ENCODE measurements at regions of chr11 and their contacts with region 1.

Region 1: DNA sequence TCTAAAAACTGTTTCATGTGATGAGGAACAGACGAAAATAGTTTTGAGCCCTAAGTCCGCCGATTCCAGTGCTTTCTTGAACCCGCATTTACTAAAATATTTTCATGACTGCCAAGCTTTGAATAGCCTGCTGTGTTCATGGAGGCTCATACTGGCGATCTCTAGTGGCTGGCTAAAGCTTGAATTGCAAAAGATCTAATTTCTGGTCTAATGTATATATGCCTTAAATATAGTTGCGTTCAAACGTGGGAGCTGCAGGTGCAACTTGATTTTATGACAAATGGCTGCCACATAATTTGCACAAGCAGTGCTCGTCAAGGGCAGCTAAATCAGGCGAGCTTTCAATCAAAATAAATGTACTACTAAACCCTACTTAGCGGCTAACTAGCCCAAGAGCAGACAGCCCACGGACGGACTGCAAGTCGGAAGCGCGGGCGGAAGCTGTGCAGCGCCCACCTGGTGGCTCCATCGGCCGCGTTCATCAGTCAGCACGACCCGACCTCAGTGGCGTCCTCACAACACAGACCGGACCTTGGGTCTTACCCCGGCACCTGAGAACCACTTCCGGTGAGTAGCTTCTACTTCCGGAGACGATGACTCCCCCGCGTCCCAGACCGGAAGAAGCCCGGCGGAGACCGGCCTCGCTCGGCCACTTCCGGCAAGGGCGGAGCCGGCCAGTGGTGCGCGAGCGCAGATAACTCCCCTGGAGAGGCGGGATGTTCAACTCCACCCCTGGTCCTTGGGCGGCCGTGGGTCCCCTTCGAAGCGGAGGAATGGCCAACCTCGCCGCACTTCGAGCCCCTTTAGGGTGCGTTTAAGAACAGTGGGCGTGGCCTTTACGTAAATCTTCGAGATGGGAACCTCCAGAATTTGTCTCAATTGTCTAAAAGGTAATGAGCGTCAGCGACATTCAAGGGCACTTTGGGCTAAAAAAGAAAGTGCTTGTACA is 6.1 kb downstream of the RPL27A start:
- DNase-seq: peak; percentile 92
- ATAC-seq: peak; percentile 90
- H3K4me3 Mint-ChIP-seq: peak overlapping the region; percentile 94
- H3K27ac Mint-ChIP-seq: peak overlapping the region; percentile 98
- H3K4me1 Mint-ChIP-seq: peaks cover 56% of the 10 kb centered on the region
- H3K27me3 Mint-ChIP-seq: no peaks in the 10 kb centered on the region

Region 2: GRCh38 chr11:8545698-8546366 is 142.9 kb before region 1 on chr11:
- CTCF ChIA-PET with region 1: no interaction called
- POLR2A ChIA-PET with region 1: no interaction called
- intact Hi-C with region 1: no loop called
- DNase-seq: no peak
- ATAC-seq: no peak
- H3K4me3 Mint-ChIP-seq: no peak overlapping the region
- H3K27ac Mint-ChIP-seq: no peak overlapping the region
- H3K4me1 Mint-ChIP-seq: no peaks in the 10 kb centered on the region
- H3K27me3 Mint-ChIP-seq: peaks cover 7% of the 10 kb centered on the region

Region 3: DNA sequence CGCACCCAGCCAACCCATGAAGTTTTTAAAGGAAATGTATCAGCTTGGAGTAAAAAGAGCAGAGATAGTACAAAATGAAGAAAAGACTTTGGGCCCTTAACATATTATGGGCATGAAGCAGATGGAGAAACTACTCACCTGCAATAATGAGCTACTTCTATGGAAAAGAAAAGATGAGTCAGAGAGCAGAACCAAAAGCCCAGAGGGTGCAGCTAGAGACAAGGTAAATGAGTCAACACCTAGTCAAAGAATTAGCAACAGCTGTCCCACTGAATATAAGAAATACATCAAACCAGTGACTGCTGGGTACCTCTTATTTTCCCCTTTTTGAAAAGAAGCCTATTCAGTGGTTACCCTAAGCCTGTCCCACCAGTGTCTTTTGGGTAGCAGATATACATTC is 55.7 kb after region 1 on chr11:
- CTCF ChIA-PET with region 1: no interaction called
- POLR2A ChIA-PET with region 1: no interaction called
- intact Hi-C with region 1: loop called in 1 of 2 experiments (anchors 2 kb)
- DNase-seq: peak; percentile 20
- ATAC-seq: peak; percentile 98
- H3K4me3 Mint-ChIP-seq: no peak overlapping the region
- H3K27ac Mint-ChIP-seq: no peak overlapping the region
- H3K4me1 Mint-ChIP-seq: peaks cover 9% of the 10 kb centered on the region
- H3K27me3 Mint-ChIP-seq: peaks cover 15% of the 10 kb centered on the region

Region 4: GRCh38 chr11:8911029-8911826 is 222.5 kb after region 1 on chr11 and contains the start of gene AKIP1:
- CTCF ChIA-PET with region 1: no interaction called
- POLR2A ChIA-PET with region 1: interaction called, 3 read pairs
- intact Hi-C with region 1: loop called in 1 of 2 experiments (anchors 5 kb)
- DNase-seq: peak; percentile 94
- ATAC-seq: peak; percentile 76
- H3K4me3 Mint-ChIP-seq: peak within 1 kb of the TSS; percentile 86
- H3K27ac Mint-ChIP-seq: peak within 1 kb of the TSS; percentile 89
- H3K4me1 Mint-ChIP-seq: peaks cover 45% of the 10 kb centered on the region
- H3K27me3 Mint-ChIP-seq: peaks cover 6% of the 10 kb centered on the region
- total RNA-seq, gene AKIP1: 29.8 to 32.2 TPM

Region 5: GRCh38 chr11:9060700-9061111 is 372.0 kb after region 1 on chr11:
- CTCF ChIA-PET with region 1: no interaction called
- POLR2A ChIA-PET with region 1: no interaction called
- intact Hi-C with region 1: loop called in 1 of 2 experiments (anchors 5 kb)
- DNase-seq: peak; percentile 88
- ATAC-seq: peak; percentile 100
- H3K4me3 Mint-ChIP-seq: no peak overlapping the region
- H3K27ac Mint-ChIP-seq: peak overlapping the region; percentile 29
- H3K4me1 Mint-ChIP-seq: peaks cover 13% of the 10 kb centered on the region
- H3K27me3 Mint-ChIP-seq: peaks cover 25% of the 10 kb centered on the region

Region 6: GRCh38 chr11:10455637-10456487 is 1767.2 kb after region 1 on chr11:
- CTCF ChIA-PET with region 1: no interaction called
- POLR2A ChIA-PET with region 1: no interaction called
- intact Hi-C with region 1: loop called in 1 of 2 experiments (anchors 10 kb)
- DNase-seq: peak; percentile 91
- ATAC-seq: peak; percentile 80
- H3K4me3 Mint-ChIP-seq: peak overlapping the region; percentile 91
- H3K27ac Mint-ChIP-seq: peak overlapping the region; percentile 98
- H3K4me1 Mint-ChIP-seq: peaks cover 88% of the 10 kb centered on the region
- H3K27me3 Mint-ChIP-seq: no peaks in the 10 kb centered on the region